ENCODE measurements at regions of chr14 and their contacts with region 1.

Region 1: DNA sequence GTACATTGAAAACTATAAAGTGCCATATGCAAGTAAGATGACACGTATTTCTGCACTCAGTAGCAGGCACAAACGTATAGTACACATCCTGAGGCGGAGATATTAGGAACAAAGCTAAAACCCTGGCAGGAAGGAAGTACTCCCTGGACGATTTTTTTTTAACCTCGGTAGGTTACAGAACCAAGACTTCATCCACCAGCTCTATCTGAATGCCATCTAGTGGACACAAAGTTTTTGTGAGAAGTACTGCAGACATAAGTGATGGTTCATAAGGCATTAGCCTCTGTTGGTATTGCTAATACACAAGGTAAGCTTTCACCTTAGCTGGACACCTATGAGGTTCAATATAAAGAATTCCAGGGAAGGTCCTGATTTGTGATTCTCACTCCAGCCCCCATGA is 83.0 kb upstream of the CCDC196 start:
- DNase-seq: no peak

Region 2: GRCh38 chr14:65434214-65434850 is 968.9 kb before region 1 on chr14:
- intact Hi-C with region 1: no loop called
- DNase-seq: no peak

Region 3: DNA sequence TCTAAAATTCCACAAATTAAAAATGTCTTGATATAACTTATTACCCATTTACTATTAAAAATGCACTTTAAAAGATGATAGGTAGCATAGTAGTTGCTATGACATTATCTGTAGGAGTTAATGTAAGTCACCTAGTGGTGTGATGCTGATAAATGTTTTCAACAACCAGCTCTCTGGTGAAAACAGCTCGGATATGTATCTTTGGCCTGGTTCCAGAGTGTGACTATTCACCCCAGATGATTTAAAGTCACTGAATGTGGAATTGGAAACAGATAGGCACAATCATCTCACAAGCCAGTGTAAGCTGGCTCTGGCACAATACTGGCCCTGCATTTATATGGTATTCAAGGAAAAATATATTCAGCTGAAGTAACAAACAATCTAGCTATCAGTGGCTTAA is 73.8 kb after region 1 on chr14:
- intact Hi-C with region 1: no loop called
- DNase-seq: no peak

Region 4: GRCh38 chr14:66746316-66747006 is 343.3 kb after region 1 on chr14:
- intact Hi-C with region 1: loop called (anchors 10 kb)
- DNase-seq: no peak